Mammary epithelial cell (primary cell): ENCODE measurements at regions of chr3 and their contacts with region 1.

Region 1: DNA sequence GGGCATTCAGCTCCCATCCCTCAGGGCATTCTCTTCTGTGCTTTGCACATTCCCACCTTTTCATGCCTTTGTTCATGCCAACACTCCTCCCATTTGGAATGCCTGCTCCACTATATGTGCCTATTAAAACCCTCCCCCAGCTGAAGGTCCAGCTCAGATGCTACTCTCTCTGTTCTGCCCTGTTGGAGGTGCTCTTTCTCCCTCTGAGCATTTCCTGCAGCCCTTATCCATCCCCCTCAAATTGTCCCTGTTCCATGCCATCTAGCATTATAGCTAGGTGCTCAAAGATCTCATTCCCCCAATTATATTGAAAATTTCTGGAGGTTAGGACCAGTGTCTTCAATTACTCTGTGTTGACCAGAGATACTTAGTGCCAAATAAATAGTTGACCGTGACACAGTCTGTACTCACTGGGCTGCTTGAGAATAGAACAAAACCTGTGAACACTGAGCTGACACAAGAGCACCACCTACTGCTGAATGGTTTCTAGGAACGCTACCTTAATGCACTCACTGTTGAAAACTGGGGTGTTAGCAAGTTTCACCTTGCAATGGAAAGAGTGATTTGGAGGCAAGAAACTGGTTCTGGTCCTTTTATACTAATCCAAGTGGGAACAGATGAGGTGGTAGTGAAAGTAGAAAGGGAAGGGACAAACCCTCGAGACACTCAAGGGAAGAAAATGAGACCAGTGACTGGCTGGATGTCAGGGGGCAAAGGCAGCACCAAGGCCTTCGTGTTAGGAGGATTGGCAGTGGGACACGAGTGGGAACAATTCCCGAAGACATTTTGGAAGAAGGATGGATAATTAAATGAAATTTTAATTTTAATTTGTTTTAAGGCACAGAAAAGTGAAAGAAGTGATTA is 289.8 kb upstream of the ROPN1 start:
- DNase-seq: peak; percentile 41
- H3K4me3 ChIP-seq: no peak overlapping the region
- H3K27ac ChIP-seq: no peak overlapping the region
- H3K4me1 ChIP-seq: peaks cover 9% of the 10 kb centered on the region
- H3K27me3 ChIP-seq: no peaks in the 10 kb centered on the region
- CTCF ChIP-seq: peak; percentile 66 to 77

Region 2: GRCh38 chr3:124007186-124007585 is 274.5 kb before region 1 on chr3:
- CTCF ChIA-PET with region 1: no interaction called
- dilution Hi-C with region 1: no loop called
- in situ Hi-C with region 1: loop called (anchors 10 to 25 kb)
- intact Hi-C with region 1: no loop called
- DNase-seq: no peak
- H3K4me3 ChIP-seq: no peak overlapping the region
- H3K27ac ChIP-seq: no peak overlapping the region
- H3K4me1 ChIP-seq: no peaks in the 10 kb centered on the region
- H3K27me3 ChIP-seq: no peaks in the 10 kb centered on the region
- CTCF ChIP-seq: no peak

Region 3: DNA sequence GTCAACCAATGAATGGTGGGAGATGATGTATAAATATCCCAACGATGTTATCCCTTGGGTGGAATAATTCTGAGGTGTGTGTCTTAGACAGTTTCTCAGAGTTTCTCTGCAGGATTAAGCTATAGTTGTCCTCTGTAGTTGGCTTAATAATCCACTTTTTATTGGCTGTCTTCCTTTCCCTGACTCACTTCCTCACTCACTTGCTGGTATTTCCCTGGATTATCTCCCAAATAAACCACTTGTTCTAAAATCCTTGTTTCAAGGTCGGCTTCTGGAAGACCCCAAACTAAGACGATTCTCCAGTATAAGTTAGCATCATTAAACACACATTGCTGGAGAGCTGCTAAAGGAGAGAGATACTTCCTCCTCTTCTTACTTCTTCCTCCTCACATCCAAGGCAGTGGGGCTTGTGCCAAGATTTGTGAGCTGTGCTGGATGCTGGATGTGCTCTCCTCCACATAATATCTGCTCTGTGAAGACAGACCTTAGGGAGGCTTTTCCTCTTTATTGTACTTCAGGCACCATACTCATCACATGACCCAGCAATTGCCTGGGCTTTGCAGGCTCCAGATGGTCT is 267.2 kb before region 1 on chr3:
- CTCF ChIA-PET with region 1: no interaction called
- dilution Hi-C with region 1: no loop called
- in situ Hi-C with region 1: loop called (anchors 10 to 25 kb)
- intact Hi-C with region 1: no loop called
- DNase-seq: no peak
- H3K4me3 ChIP-seq: no peak overlapping the region
- H3K27ac ChIP-seq: no peak overlapping the region
- H3K4me1 ChIP-seq: no peaks in the 10 kb centered on the region
- H3K27me3 ChIP-seq: peaks cover 5% of the 10 kb centered on the region
- CTCF ChIP-seq: no peak

Region 4: GRCh38 chr3:124248471-124249028 is 33.1 kb before region 1 on chr3:
- CTCF ChIA-PET with region 1: no interaction called
- dilution Hi-C with region 1: no loop called
- in situ Hi-C with region 1: no loop called
- intact Hi-C with region 1: loop called (anchors 1 kb)
- DNase-seq: peak; percentile 63
- H3K4me3 ChIP-seq: no peak overlapping the region
- H3K27ac ChIP-seq: no peak overlapping the region
- H3K4me1 ChIP-seq: peaks cover 28% of the 10 kb centered on the region
- H3K27me3 ChIP-seq: no peaks in the 10 kb centered on the region
- CTCF ChIP-seq: no peak

Region 5: DNA sequence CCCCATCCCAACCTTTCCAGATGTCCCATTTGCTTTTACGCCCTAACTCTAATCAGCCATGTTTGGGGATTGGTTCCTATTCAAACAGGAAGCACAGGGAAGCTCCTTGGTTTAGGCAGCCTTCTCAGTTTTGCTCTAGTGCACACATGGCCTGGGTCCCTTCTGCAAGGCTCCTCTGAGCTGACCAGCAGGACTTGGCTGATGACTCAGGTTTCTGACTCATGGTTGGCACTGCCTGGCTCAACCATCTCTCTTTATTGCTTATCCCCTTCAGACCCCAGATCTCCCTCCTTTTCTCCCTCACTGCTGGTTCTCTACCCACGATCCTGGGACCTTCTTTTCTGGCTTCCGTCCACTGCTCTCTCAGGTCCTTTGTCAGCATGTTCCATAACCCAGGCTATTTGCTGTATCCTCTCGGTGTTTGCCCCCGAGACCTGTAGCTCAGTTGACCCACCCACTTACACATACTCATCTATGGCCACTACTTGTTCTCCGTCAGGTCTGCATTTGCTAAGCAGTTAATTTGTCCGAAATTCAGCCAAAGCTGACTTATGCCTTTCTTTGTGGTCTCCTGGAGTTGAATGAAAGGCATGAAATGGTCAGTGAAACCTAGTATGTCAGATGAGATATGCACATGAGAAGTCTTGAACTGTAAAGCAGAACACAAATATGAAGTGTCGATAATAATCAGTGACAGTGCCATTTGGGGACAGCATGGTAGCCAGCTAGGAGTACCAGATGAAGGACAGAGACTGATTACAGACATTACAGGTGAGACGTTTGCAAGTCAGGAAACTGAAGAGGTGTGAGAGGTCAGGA is 33.7 kb after region 1 on chr3:
- CTCF ChIA-PET with region 1: no interaction called
- dilution Hi-C with region 1: no loop called
- in situ Hi-C with region 1: no loop called
- intact Hi-C with region 1: no loop called
- DNase-seq: peak; percentile 42
- H3K4me3 ChIP-seq: no peak overlapping the region
- H3K27ac ChIP-seq: no peak overlapping the region
- H3K4me1 ChIP-seq: no peaks in the 10 kb centered on the region
- H3K27me3 ChIP-seq: no peaks in the 10 kb centered on the region
- CTCF ChIP-seq: no peak